A549 (cell line): ENCODE measurements at regions of chr17 and their contacts with region 1.

Region 1: DNA sequence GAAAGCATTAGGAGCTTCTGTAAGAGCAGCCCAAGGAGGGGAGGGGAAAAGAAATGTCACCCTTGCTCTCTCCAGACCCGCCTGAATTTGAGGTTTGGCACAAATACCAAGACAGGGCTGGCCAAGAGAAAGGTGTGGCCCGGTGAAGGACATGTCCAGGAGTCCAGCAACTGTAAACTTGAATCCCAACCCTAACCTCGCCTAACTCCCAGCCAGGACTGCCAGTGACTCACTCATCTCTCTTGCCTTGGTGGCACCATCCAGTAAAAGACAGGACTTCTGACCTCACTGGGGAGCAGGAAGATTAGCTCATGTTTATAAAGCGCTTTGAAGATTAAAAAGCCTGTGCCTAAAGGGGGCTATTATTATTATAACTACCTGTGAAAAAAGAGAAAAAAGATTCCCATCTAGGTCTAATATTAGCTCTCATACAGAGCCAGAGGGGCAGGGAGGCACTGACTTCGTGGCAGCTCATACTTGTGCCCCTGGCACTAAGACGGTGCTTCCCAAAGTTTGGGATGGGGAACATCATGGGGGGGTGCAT is 335.3 kb downstream of the SOX9 start:
- DNase-seq: peak; percentile 89 to 97
- ATAC-seq: peak; percentile 78 to 83
- H3K4me3 ChIP-seq: 0 out of 3 replicates have a peak overlapping the region, but pooled peaks have one; percentile 9
- H3K27ac ChIP-seq: peak overlapping the region; percentile 84 to 88
- H3K4me1 ChIP-seq: peaks cover 94% of the 10 kb centered on the region
- CTCF ChIP-seq: no peak
- EP300 ChIP-seq: peak; percentile 46 to 70; a peak in 2 of 5 replicates
- POLR2A ChIP-seq: no peak
- RAD21 ChIP-seq: no peak; a peak in 3 of 5 replicates

Region 2: GRCh38 chr17:72388765-72389473 is 67.2 kb before region 1 on chr17:
- CTCF ChIA-PET with region 1: interaction called, 13 read pairs
- POLR2A ChIA-PET with region 1: no interaction called
- DNase-seq: peak; percentile 87 to 90
- ATAC-seq: peak; percentile 65 to 76
- H3K4me3 ChIP-seq: no peak overlapping the region
- H3K27ac ChIP-seq: peak overlapping the region; percentile 76 to 85
- H3K4me1 ChIP-seq: peaks cover 87% of the 10 kb centered on the region
- CTCF ChIP-seq: peak; percentile 55
- EP300 ChIP-seq: peak; percentile 60 to 75; a peak in 3 of 5 replicates
- POLR2A ChIP-seq: no peak
- RAD21 ChIP-seq: peak; percentile 77 to 87

Region 3: GRCh38 chr17:72618001-72618509 is 162.0 kb after region 1 on chr17:
- CTCF ChIA-PET with region 1: no interaction called
- POLR2A ChIA-PET with region 1: no interaction called
- DNase-seq: peak in 1 of 2 experiments; percentile 43
- ATAC-seq: no peak
- H3K4me3 ChIP-seq: no peak overlapping the region
- H3K27ac ChIP-seq: peak overlapping the region; percentile 89 to 99; a peak in 5 of 6 replicates
- H3K4me1 ChIP-seq: peaks cover 48% of the 10 kb centered on the region
- CTCF ChIP-seq: no peak
- EP300 ChIP-seq: no peak
- POLR2A ChIP-seq: no peak
- RAD21 ChIP-seq: no peak